Esophagus muscularis mucosa (tissue), 4 donors: ENCODE measurements at regions of chr20 and their contacts with region 1.

Region 1: DNA sequence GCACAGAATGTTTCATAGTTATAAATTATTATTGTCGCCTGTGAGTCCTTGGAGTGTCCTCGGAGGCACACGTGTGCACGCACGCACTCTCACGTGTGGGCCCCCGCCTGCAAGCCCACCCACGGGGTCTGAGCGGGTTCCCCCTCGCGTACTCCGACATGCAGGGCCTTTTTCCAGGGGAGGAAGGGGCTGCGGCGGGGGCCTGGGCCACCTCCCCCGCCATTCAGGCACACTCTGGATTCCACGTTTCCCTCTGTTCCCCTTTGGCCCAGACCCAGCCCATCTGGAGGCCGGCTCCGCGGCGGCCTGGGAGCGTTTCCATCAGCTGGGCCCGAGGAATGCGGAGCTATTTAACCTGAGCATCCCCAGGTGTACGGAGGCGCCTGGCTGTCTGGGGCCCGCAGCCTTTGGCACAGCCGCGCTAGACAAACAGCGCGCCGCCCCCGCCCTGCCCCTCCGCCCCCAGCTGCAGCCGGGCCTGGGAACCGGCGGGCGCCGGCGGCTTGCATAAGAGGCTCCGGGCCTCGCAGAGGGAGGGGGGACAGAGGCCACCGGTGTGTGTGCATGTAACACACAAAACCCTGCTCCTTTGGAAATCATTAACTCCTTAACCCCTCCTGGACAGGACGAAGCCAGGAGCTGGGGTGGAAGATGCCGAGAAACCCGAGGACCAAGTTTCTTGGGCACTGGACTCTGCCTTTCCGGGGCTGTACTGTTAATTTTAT is 3.3 kb downstream of the ID1 start:
- DNase-seq: no peak
- H3K4me3 ChIP-seq: peak overlapping the region; percentile 71 to 83 (median 74)
- H3K27ac ChIP-seq: peak overlapping the region; percentile 91 to 98 (median 94)
- H3K4me1 ChIP-seq: peaks cover 52 to 82% (median 78%) of the 10 kb centered on the region in 4 donors
- H3K27me3 ChIP-seq: no peaks in the 10 kb centered on the region
- CTCF ChIP-seq: peak in 1 of 3 experiments; percentile 4
- EP300 ChIP-seq: peak; percentile 70
- POLR2A ChIP-seq: no peak

Region 2: GRCh38 chr20:31355981-31356380 is 252.4 kb before region 1 on chr20:
- intact Hi-C with region 1: no loop called
- DNase-seq: no peak
- H3K4me3 ChIP-seq: no peak overlapping the region
- H3K27ac ChIP-seq: no peak overlapping the region
- H3K4me1 ChIP-seq: no peaks in the 10 kb centered on the region
- H3K27me3 ChIP-seq: no peaks in the 10 kb centered on the region
- CTCF ChIP-seq: no peak
- EP300 ChIP-seq: no peak
- POLR2A ChIP-seq: no peak

Region 3: GRCh38 chr20:31562241-31562640 is 46.2 kb before region 1 on chr20:
- intact Hi-C with region 1: loop called (anchors 2 kb)
- DNase-seq: no peak
- H3K4me3 ChIP-seq: no peak overlapping the region
- H3K27ac ChIP-seq: peak overlapping the region in 1 of 4 donors; percentile 78
- H3K4me1 ChIP-seq: peaks cover 13 to 47% (median 31%) of the 10 kb centered on the region in 4 donors
- H3K27me3 ChIP-seq: no peaks in the 10 kb centered on the region
- CTCF ChIP-seq: no peak
- EP300 ChIP-seq: no peak
- POLR2A ChIP-seq: no peak

Region 4: DNA sequence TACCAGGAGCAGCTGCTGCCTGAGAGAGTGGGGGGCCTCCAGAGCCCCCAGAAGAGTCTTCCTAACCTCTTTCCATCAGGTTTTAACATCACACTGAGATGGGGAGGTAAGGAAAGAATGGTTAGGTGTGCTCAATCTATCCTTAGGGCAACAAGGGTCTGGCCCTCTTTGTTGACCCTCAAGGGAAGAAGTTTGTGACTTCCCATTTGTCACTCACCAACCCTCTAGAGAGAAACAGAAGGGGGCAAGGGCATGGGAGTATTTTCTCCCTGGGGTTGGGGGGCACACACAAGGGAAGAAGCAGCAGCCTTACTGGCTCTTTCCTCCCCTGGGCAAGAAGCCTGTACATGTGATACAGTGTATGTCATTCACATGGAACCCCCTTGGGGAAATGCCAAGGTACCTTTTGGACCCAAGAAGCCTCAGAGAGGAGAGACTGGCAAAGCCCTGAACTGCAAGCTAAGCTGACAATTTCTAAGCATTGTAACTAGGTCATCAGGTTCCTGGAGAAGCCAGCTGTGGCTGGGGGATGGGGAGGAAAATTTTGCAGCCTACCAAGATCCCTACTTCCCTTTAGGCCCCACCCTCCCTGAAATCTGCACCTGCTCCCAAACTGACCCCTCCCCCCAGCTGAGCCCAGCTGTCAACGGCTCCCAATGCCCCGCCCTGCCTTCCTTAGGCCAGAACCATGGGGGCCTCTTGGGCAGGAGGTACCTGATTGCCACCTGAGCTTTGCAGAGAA is 99.7 kb after region 1 on chr20:
- intact Hi-C with region 1: no loop called
- DNase-seq: no peak
- H3K4me3 ChIP-seq: no peak overlapping the region
- H3K27ac ChIP-seq: peak overlapping the region; percentile 41 to 93 (median 58)
- H3K4me1 ChIP-seq: peaks cover 79 to 96% (median 90%) of the 10 kb centered on the region in 4 donors
- H3K27me3 ChIP-seq: no peaks in the 10 kb centered on the region
- CTCF ChIP-seq: no peak
- EP300 ChIP-seq: no peak
- POLR2A ChIP-seq: no peak